ENCODE measurements at regions of chr2 and their contacts with region 1.

Region 1: GRCh38 chr2:217713395-217714286 is 289.2 kb downstream of the TNS1 start:
- DNase-seq: peak; percentile 71
- H3K4me3 Mint-ChIP-seq: no peak overlapping the region
- H3K27ac Mint-ChIP-seq: no peak overlapping the region
- H3K4me1 Mint-ChIP-seq: no peaks in the 10 kb centered on the region
- H3K27me3 Mint-ChIP-seq: peaks cover 22% of the 10 kb centered on the region
- CTCF ChIP-seq: peak; percentile 99

Region 2: DNA sequence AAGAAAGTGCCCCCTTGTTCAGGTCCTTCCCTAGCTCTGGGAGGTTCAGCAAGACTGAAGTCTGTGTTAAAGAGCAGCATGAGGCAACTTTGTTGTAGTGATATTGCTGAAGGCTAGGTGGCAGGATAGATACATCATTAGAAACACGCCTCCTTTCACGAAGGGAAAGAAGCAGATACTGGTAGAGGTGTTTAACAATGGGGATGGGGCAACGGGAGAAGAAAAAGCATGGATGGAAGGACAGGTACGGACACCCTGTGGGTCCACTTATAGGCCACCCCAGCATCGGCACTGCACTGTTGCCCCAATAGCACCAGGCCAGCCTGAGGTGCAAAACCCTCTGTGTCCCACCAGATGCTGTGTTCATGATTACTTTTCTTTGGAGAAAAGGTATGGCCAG is 1014.7 kb before region 1 on chr2:
- CTCF ChIA-PET with region 1: interaction called, 19 read pairs
- POLR2A ChIA-PET with region 1: interaction called, 6 read pairs
- intact Hi-C with region 1: loop called (anchors 1 kb)
- DNase-seq: peak; percentile 68
- H3K4me3 Mint-ChIP-seq: no peak overlapping the region
- H3K27ac Mint-ChIP-seq: no peak overlapping the region
- H3K4me1 Mint-ChIP-seq: peaks cover 15% of the 10 kb centered on the region
- H3K27me3 Mint-ChIP-seq: no peaks in the 10 kb centered on the region
- CTCF ChIP-seq: peak; percentile 53

Region 3: DNA sequence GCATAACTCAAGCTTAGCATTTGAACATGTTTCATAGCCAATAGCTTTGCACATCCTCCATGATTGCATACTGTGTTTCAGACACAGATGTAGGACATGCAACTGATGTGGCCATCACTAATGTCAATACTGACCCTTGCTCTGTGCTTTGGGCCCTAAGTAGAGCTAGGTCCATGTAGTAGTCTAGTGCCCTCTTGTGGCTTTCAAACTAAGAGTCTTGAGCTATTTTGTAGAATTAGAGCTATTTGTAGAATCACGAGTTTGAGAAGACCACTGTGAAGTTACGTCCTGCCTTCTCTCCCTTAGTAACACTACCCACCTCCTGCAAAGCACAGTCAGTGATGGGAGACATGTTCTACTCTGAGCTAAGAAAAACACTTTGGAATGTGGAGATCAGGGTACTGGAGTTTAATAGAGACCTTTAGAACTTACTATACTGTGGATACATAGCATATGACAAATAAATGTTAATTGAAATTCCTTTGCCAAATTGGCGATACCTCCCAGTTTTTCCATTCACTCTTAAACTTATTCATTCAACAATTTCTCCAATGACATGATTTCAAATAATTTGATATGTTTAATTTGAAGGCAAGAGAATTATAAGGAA is 547.3 kb before region 1 on chr2:
- CTCF ChIA-PET with region 1: interaction called, 4 read pairs
- POLR2A ChIA-PET with region 1: no interaction called
- intact Hi-C with region 1: loop called (anchors 1 kb)
- DNase-seq: peak; percentile 54
- H3K4me3 Mint-ChIP-seq: no peak overlapping the region
- H3K27ac Mint-ChIP-seq: no peak overlapping the region
- H3K4me1 Mint-ChIP-seq: peaks cover 6% of the 10 kb centered on the region
- H3K27me3 Mint-ChIP-seq: no peaks in the 10 kb centered on the region
- CTCF ChIP-seq: peak; percentile 65

Region 4: GRCh38 chr2:217510771-217511291 is 202.8 kb before region 1 on chr2:
- CTCF ChIA-PET with region 1: interaction called, 15 read pairs
- POLR2A ChIA-PET with region 1: interaction called, 3 read pairs
- intact Hi-C with region 1: loop called (anchors 1 kb)
- DNase-seq: peak; percentile 79
- H3K4me3 Mint-ChIP-seq: no peak overlapping the region
- H3K27ac Mint-ChIP-seq: peak overlapping the region; percentile 52
- H3K4me1 Mint-ChIP-seq: no peaks in the 10 kb centered on the region
- H3K27me3 Mint-ChIP-seq: no peaks in the 10 kb centered on the region
- CTCF ChIP-seq: peak; percentile 80

Region 5: GRCh38 chr2:217636991-217637944 is 76.4 kb before region 1 on chr2:
- CTCF ChIA-PET with region 1: interaction called, 10 read pairs
- POLR2A ChIA-PET with region 1: no interaction called
- intact Hi-C with region 1: no loop called
- DNase-seq: no peak
- H3K4me3 Mint-ChIP-seq: no peak overlapping the region
- H3K27ac Mint-ChIP-seq: no peak overlapping the region
- H3K4me1 Mint-ChIP-seq: no peaks in the 10 kb centered on the region
- H3K27me3 Mint-ChIP-seq: no peaks in the 10 kb centered on the region
- CTCF ChIP-seq: no peak

Region 6: DNA sequence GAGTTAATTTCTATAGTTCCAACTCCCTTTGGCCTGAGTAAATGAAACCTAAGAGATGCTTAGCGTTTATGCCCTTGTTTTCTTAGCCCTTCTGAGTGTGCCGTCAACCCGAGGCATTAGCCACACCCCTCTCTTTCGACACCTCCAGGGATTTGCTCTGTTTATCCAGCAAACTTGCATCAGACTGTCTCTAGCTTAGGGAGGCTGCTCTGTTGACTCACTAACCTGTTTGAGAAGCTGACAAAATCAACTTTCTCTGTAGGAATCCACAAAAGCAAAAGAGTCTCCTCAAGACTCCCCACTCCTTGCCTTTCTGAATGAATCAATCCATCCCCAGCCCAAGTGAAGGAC is 28.4 kb before region 1 on chr2:
- CTCF ChIA-PET with region 1: interaction called, 12 read pairs
- POLR2A ChIA-PET with region 1: interaction called, 3 read pairs
- intact Hi-C with region 1: no loop called
- DNase-seq: peak; percentile 96
- H3K4me3 Mint-ChIP-seq: no peak overlapping the region
- H3K27ac Mint-ChIP-seq: peak overlapping the region; percentile 4
- H3K4me1 Mint-ChIP-seq: peaks cover 24% of the 10 kb centered on the region
- H3K27me3 Mint-ChIP-seq: no peaks in the 10 kb centered on the region
- CTCF ChIP-seq: no peak

Measured in MCF 10A (cell line).